ENCODE measurements at regions of chr1 and their contacts with region 1.

Region 1: DNA sequence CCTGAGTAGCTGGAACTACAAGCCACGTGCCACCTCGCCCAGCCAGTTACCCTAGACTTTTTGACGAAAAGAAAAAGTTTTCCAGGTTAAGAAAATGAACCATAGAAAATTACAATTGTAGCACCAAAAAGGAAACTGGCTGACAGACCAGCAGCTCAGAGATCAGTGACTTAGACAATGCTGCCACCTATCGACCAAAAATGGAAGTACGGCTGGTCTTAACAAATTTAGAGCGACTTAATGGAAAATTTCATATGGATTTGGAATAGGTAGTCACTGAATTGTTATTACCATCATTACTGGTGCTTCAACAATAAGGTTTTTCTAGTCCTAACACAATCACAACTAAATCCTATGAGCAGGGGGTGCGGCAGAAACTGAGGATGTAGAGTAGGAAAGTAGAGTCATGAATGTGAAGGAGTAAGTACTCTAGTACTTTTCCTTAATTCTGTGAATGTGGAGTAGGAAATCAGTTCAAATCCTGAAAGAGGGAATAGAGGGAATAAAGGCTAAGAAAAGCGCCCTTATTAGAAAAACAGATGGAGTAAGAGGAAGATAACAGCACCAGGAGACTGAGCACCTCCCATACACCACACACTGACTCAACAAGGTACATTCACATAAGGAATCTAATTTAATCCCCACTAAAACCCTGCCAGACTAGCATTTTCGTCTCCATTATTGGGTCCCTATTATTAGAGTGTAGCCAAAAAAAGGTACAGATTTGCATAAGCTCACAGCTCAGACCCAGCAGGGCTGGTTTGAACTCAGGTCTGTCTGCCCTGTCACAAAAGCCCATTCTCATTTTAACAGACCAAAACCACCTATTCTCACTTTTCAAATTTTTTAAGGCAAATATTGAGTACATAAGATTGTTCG is 37.9 kb upstream of the MGST3 start:
- DNase-seq: peak; percentile 37
- ATAC-seq: peak; percentile 66

Region 2: GRCh38 chr1:165253818-165254254 is 339.3 kb before region 1 on chr1:
- intact Hi-C with region 1: no loop called
- DNase-seq: no peak
- ATAC-seq: no peak

Region 3: GRCh38 chr1:165392634-165393571 is 200.3 kb before region 1 on chr1:
- intact Hi-C with region 1: loop called (anchors 2 kb)
- DNase-seq: peak; percentile 91
- ATAC-seq: peak; percentile 91

Region 4: GRCh38 chr1:165403835-165404482 is 189.2 kb before region 1 on chr1:
- intact Hi-C with region 1: loop called (anchors 2 kb)
- DNase-seq: no peak
- ATAC-seq: peak; percentile 77

Measured in Right ventricle myocardium superior (tissue), 1 donor.